Mammary epithelial cell (primary cell): ENCODE measurements at regions of chr11 and their contacts with region 1.

Region 1: GRCh38 chr11:9384535-9385303 is at the start of gene IPO7:
- DNase-seq: peak; percentile 89
- H3K4me3 ChIP-seq: peak within 1 kb of the TSS; percentile 65 to 86 (median 70)
- H3K27ac ChIP-seq: peak within 1 kb of the TSS; percentile 89
- H3K4me1 ChIP-seq: peaks cover 6% of the 10 kb centered on the region
- H3K27me3 ChIP-seq: no peaks in the 10 kb centered on the region
- CTCF ChIP-seq: peak; percentile 18 to 42
- total RNA-seq, gene IPO7: 122 to 158 TPM

Region 2: DNA sequence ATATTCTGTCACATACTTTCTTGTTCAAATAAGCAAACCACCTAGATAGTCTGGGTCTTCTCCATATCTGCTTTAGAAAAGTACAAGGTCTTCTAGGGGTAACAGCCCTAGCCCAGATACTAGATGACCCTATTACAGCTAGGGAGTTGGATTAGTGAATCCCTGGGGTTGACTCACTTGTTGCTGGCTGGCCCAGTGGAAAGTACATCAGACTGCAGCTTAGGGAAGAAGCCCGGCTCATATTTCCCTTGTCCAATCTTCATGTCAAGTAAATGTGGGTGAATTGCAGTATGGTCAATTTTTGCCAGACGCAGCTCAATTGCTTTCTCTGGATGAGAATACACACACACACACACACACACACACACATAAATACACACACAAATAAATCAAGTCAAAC is 214.3 kb before region 1 on chr11:
- CTCF ChIA-PET with region 1: no interaction called
- dilution Hi-C with region 1: no loop called
- in situ Hi-C with region 1: loop called in 1 of 2 experiments (anchors 25 kb)
- intact Hi-C with region 1: loop called (anchors 5 kb)
- DNase-seq: no peak
- H3K4me3 ChIP-seq: no peak overlapping the region
- H3K27ac ChIP-seq: no peak overlapping the region
- H3K4me1 ChIP-seq: peaks cover 7% of the 10 kb centered on the region
- H3K27me3 ChIP-seq: no peaks in the 10 kb centered on the region
- CTCF ChIP-seq: no peak

Region 3: DNA sequence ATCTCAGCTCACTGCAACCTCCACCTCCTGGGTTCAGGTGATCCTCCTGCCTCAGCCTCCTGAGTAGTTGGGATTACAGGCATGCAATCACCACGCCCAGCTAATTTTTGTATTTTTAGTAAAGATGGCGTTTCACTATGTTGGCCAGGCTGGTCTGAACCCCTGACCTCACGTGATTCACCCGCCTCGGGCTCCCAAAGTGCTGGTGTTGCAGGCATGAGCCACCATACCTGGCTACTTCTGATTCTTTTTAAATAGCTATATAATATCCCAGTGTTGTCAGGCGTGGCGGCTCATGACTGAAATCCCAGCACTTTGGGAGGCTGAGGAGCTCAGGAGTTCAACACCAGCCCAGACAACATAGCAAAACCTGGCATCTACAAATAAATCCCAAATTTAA is 91.1 kb before region 1 on chr11:
- CTCF ChIA-PET with region 1: no interaction called
- dilution Hi-C with region 1: no loop called
- in situ Hi-C with region 1: no loop called
- intact Hi-C with region 1: loop called (anchors 5 kb)
- DNase-seq: no peak
- H3K4me3 ChIP-seq: no peak overlapping the region
- H3K27ac ChIP-seq: no peak overlapping the region
- H3K4me1 ChIP-seq: no peaks in the 10 kb centered on the region
- H3K27me3 ChIP-seq: no peaks in the 10 kb centered on the region
- CTCF ChIP-seq: no peak

Region 4: GRCh38 chr11:9347100-9347499 is 37.6 kb before region 1 on chr11:
- CTCF ChIA-PET with region 1: no interaction called
- dilution Hi-C with region 1: loop called (anchors 5 kb)
- in situ Hi-C with region 1: no loop called
- intact Hi-C with region 1: no loop called
- DNase-seq: no peak
- H3K4me3 ChIP-seq: no peak overlapping the region
- H3K27ac ChIP-seq: no peak overlapping the region
- H3K4me1 ChIP-seq: peaks cover under 1% of the 10 kb centered on the region
- H3K27me3 ChIP-seq: no peaks in the 10 kb centered on the region
- CTCF ChIP-seq: no peak

Region 5: DNA sequence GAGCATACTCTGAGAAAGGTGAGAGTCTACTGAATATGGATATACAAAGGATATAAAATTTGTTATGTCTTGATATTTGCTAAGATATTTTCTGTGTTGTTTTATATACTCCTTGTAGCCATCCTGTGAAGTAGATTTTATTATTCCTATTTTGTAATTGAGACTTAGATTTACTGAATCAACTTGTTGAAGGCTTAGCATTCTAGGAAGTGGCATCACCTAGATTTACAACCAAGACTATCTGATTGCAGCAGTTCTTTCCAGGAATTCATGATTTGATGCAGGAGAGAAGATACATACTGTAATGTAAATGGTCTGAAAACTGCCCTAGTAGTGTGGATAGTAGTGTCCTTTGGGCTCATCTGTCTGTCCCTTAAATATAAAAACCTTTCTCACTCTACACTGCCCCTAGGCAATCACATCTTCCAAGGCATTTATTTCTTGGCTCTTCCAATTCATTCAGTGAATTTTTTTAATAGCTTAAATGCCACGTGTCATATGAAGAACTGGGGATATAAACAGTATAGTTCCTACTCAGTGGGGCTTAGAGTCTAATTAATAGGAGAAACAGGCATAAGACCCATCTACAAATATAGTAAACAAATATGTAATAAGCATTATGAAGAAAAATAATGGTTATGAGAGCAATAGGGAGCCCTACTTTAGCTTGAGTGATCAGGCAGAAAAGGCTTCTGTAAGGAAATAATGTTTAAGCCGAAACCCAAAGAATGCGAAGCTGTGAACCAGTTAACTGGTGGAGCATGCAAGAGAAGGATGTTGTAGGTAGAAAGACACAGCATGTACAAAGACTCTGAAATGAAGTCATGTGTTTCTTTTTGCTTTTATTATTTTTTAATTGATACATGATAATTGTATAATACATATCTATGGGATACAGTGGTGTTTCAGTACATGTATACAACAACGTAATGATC is 13.3 kb after region 1 on chr11:
- CTCF ChIA-PET with region 1: no interaction called
- dilution Hi-C with region 1: no loop called
- in situ Hi-C with region 1: no loop called
- intact Hi-C with region 1: no loop called
- DNase-seq: no peak
- H3K4me3 ChIP-seq: no peak overlapping the region
- H3K27ac ChIP-seq: no peak overlapping the region
- H3K4me1 ChIP-seq: peaks cover 4% of the 10 kb centered on the region
- H3K27me3 ChIP-seq: no peaks in the 10 kb centered on the region
- CTCF ChIP-seq: no peak